Dorsolateral prefrontal cortex (tissue), 120 donors: ENCODE measurements at regions of chr1 and their contacts with region 1.

Region 1: DNA sequence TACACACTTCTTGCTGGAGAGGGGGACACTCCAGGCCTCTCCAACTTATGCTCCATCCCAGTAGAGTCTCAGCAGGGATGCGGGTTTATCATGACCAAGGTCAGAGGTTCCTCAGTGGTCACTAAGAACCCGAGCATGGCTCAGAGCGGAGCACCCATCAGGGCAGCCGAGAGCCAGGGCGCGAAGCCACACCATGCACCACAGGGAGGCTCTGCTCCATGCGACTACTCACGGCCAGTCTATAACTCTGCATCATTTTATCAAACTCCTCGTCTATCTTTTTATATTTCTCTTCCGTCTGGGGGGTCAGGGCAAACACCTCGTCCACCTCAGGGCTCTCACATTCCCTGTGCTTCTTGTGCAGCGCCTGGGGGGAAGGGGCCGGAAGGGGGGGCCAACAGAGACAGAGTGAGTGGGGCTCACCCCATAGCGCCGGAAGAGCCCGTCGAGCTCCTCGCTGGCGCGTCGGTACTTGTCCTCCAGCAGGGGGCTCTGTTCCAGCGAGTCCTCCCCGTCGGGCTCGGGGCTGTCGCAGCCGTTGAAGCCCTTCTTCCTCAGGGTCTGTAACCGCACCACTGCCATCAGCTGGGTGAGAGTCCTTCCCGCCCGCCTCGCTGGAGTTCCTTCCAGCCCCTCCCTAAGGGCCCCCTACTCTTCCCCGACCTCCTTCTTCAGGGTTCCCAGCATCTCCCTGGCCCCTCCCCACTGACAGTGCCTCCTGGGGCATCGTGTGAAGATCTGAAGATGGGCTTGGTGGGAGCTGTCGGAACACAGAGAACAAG is 20.0 kb downstream of the MEF2D start:
- DNase-seq: peak in 4 of 10 donors; percentile 52 to 69 (median 64)
- H3K4me3 ChIP-seq: peak overlapping the region in 2 of 59 donors; percentile 4 to 9
- H3K27ac ChIP-seq: peak overlapping the region in 58 of 59 donors; percentile 17 to 100 (median 92)
- H3K27me3 ChIP-seq: no peaks in the 10 kb centered on the region
- CTCF ChIP-seq: peak; percentile 29 to 84 (median 69)

Region 2: DNA sequence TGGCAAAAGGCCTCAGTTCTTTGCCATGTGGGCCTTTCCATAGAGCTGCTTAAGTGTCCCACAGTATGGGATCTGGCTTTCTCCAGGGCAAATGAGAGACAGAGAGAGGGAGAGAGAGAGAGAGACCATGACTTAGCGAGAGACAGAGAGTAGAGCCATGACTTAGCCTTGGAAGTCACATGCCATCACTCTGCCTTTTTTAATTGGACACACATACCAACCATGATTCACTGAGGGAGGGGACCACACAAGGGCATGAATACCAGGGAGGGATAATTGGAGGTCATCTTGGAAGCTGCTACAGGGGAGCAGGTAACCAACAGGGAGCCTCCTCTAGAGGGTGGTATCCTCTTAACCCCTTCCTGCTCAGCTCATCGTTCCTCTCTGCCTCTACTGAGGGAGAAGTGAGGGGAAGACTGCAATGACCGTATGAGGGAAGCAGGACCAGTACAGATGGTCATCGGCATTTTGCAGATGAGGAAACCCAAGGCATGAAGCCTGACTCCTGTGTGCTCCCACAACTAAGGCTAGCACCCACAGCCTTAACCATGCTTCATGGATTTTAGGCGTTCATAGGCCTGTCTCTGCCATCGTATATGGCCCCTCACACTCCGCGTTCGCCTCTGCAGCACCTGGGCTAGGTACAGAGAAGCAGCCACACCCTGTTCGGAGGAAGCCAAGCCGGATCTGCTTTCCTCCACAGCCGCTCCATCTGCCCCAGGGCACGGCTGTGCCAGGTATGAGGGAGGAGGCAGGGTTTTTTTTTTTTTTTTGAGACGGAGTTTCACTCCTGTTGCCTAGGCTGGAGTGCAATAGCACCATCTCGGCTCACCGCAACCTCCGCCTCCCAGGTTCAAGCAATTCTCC is 18.6 kb before region 1 on chr1:
- intact Hi-C with region 1: loop called in 1 of 2 experiments (anchors 2 kb)
- DNase-seq: no peak
- H3K4me3 ChIP-seq: no peak overlapping the region
- H3K27ac ChIP-seq: peak overlapping the region in 17 of 59 donors; percentile 0 to 55 (median 28)
- H3K27me3 ChIP-seq: no peaks in the 10 kb centered on the region
- CTCF ChIP-seq: no peak